Posterior cingulate gyrus (tissue), 11 donors: ENCODE measurements at regions of chr20 and their contacts with region 1.

Region 1: GRCh38 chr20:16363506-16364319 is 209.5 kb downstream of the KIF16B start:
- DNase-seq: no peak

Region 2: GRCh38 chr20:16350465-16350864 is 13.2 kb before region 1 on chr20:
- intact Hi-C with region 1: no loop called
- DNase-seq: peak in 2 of 10 donors; percentile 23 to 71

Region 3: DNA sequence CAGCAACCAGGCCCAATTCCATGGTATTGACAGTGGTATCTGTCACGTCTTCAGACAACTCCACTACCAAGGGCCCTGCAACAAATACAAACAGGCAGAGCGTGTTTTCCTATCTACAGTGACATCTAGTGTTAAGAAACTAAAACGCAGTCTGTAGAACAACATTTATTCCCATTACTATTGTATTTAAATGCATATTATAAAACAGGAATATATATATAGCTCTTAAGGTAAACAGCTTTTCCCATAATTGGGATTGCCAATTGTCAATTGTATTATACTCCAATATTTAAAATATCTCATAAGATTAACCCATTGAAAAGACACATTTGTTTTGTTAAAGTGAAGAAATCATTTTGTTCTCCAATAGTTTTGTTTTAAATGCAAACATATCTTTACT is 112.3 kb after region 1 on chr20:
- intact Hi-C with region 1: loop called (anchors 1 kb)
- DNase-seq: no peak

Region 4: GRCh38 chr20:17161673-17162481 is 798.2 kb after region 1 on chr20:
- intact Hi-C with region 1: no loop called
- DNase-seq: peak in 1 of 10 donors; percentile 41